Caco-2 (cell line): ENCODE measurements at regions of chr19 and their contacts with region 1.

Region 1: DNA sequence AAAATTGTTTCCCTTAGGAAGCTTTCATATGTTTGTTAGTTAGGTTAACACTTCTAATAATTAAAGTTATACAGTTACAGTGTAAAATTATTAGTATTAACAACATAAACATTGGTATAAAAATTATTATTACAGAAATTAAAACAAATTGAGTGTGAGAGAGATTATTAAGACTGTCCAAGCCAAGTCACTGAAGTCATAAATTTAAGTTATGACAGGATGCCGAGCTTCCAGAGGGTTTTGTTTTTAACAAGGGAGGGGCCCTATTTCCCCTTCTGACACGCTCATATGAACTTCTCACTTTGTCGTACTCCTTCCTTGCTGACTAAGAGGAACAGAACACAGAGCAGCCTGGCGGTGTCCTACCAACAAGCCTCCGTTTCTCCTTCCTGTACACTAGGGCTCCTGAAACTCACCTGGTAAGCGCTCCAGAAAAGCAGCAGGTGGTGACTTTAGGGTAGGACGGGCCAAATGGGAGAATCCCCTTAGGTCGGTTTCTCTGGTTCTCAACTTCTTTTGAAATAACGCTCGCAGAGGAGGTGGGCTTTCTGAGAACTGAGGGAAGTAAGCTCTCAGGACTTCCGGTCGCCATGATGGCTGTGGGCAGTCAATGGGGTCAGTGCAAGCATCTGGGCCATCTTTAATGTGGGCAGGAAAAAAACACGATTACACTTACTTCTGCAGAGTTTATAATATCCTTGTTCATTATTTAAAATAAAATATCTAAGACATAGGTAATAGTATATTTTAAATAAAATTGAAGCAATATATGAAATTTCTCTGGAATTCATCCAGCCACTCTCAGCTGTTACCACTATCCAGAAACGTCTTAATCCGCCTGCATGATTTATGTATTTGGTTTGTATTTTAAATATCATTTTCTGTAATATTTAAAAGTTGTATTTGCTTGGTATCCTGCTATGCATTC is at the start of gene CARD8:
- DNase-seq: peak; percentile 84 to 88
- H3K4me3 ChIP-seq: peak within 1 kb of the TSS; percentile 63
- H3K4me3 Mint-ChIP-seq: peak within 1 kb of the TSS; percentile 95
- H3K27ac Mint-ChIP-seq: peak within 1 kb of the TSS; percentile 96
- H3K4me1 ChIP-seq: peaks cover 7% of the 10 kb centered on the region; the same call in 1 of the 2 replicates
- H3K4me1 Mint-ChIP-seq: peaks cover 6% of the 10 kb centered on the region
- H3K27me3 ChIP-seq: no peaks in the 10 kb centered on the region
- H3K27me3 Mint-ChIP-seq: no peaks in the 10 kb centered on the region
- CTCF ChIP-seq: no peak
- total RNA-seq, gene CARD8: 17.7 and 19.9 TPM in 2 replicates

Region 2: GRCh38 chr19:48190288-48190884 is 65.3 kb before region 1 on chr19:
- CTCF ChIA-PET with region 1: interaction called, 7 read pairs
- POLR2A ChIA-PET with region 1: no interaction called
- intact Hi-C with region 1: loop called (anchors 1 kb)
- DNase-seq: peak; percentile 93 to 95
- H3K4me3 ChIP-seq: no peak overlapping the region
- H3K4me3 Mint-ChIP-seq: peak overlapping the region; percentile 35
- H3K27ac Mint-ChIP-seq: no peak overlapping the region
- H3K4me1 ChIP-seq: peaks cover 3% of the 10 kb centered on the region; the same call in 1 of the 2 replicates
- H3K4me1 Mint-ChIP-seq: no peaks in the 10 kb centered on the region
- H3K27me3 ChIP-seq: no peaks in the 10 kb centered on the region
- H3K27me3 Mint-ChIP-seq: no peaks in the 10 kb centered on the region
- CTCF ChIP-seq: peak; percentile 65 to 77

Region 3: DNA sequence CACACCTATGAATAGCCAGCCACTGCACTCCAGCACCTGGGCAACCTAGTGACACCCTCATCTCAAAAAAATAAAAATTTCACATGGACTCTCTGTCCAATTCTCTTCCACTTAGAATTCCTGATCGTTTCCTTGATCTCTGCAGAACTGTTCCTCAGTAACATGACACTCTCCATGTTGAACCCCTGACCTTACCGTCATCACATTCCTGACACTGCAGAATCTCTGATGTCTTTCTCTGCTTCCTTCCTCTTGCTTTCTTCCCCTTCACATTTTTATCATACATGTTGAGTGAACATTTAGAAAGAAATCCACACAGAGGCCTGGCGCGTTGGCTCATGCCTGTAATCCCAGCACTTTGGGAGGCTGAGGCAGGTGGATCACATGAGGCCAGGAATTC is 29.3 kb after region 1 on chr19:
- CTCF ChIA-PET with region 1: no interaction called
- POLR2A ChIA-PET with region 1: no interaction called
- intact Hi-C with region 1: no loop called
- DNase-seq: no peak
- H3K4me3 ChIP-seq: no peak overlapping the region
- H3K4me3 Mint-ChIP-seq: no peak overlapping the region
- H3K27ac Mint-ChIP-seq: no peak overlapping the region
- H3K4me1 ChIP-seq: no peaks in the 10 kb centered on the region
- H3K4me1 Mint-ChIP-seq: no peaks in the 10 kb centered on the region
- H3K27me3 ChIP-seq: no peaks in the 10 kb centered on the region
- H3K27me3 Mint-ChIP-seq: no peaks in the 10 kb centered on the region
- CTCF ChIP-seq: no peak

Region 4: DNA sequence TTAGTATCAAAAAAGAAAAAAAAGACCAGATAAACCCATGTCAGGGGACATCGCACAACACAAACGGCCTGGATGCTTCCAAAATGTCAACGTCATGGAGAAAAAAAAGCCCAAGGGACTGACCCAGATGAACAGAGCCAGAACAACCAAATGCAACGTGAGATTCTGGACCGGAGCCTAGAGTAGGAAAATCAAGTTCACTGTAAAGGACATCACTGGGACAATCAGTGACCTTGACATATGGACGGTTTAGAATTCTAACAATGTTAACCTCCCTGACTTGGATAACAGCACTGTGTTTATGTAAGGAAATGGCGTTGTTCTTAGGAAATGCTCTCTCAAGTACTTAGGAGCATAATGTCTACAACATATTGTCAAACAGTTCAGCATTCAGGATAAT is 54.6 kb after region 1 on chr19:
- CTCF ChIA-PET with region 1: no interaction called
- POLR2A ChIA-PET with region 1: no interaction called
- intact Hi-C with region 1: loop called (anchors 10 kb)
- DNase-seq: no peak
- H3K4me3 ChIP-seq: no peak overlapping the region
- H3K4me3 Mint-ChIP-seq: no peak overlapping the region
- H3K27ac Mint-ChIP-seq: no peak overlapping the region
- H3K4me1 ChIP-seq: peaks cover 8% of the 10 kb centered on the region; the same call in 1 of the 2 replicates
- H3K4me1 Mint-ChIP-seq: peaks cover 5% of the 10 kb centered on the region
- H3K27me3 ChIP-seq: no peaks in the 10 kb centered on the region
- H3K27me3 Mint-ChIP-seq: no peaks in the 10 kb centered on the region
- CTCF ChIP-seq: no peak